Cardiac septum (tissue), 1 donor: ENCODE measurements at regions of chr18 and their contacts with region 1.

Region 1: DNA sequence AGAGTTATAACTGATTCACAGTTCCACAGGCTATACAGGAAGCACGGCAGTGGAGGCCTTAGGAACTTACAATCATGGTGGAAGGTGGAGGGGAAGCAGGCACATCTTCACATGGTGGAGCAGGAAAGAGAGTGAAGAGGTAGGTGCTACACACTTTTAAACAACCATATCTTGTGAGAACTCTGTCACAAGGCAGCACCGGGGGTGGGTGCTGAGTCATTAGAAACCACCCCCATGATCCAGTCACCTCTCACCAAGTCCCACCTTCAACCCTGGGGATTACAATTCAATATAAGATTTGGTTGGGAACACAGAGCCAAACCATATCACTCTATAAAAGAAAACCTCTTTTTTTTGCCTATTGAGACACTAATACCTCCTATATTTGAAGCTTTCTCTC is 1108.5 kb upstream of the CDH2 start:
- DNase-seq: no peak

Region 2: GRCh38 chr18:29234751-29235150 is 50.7 kb before region 1 on chr18:
- intact Hi-C with region 1: loop called (anchors 10 kb)
- DNase-seq: no peak